Transverse colon (tissue), 4 donors: ENCODE measurements at regions of chr14 and their contacts with region 1.

Region 1: GRCh38 chr14:38721822-38722431 is 381.1 kb downstream of the SEC23A start:
- DNase-seq: peak; percentile 79
- H3K4me3 ChIP-seq: no peak overlapping the region
- H3K27ac ChIP-seq: no peak overlapping the region
- H3K4me1 ChIP-seq: no peaks in the 10 kb centered on the region
- H3K27me3 ChIP-seq: no peaks in the 10 kb centered on the region
- CTCF ChIP-seq: peak; percentile 69 to 87 (median 75)
- EP300 ChIP-seq: no peak
- POLR2A ChIP-seq: no peak

Region 2: GRCh38 chr14:38762426-38762825 is 40.5 kb after region 1 on chr14:
- in situ Hi-C with region 1: no loop called
- intact Hi-C with region 1: no loop called
- DNase-seq: no peak
- H3K4me3 ChIP-seq: no peak overlapping the region
- H3K27ac ChIP-seq: peak overlapping the region in 2 of 4 donors; percentile 1 to 38
- H3K4me1 ChIP-seq: peaks cover 0 to 17% (median 4%) of the 10 kb centered on the region in 4 donors
- H3K27me3 ChIP-seq: no peaks in the 10 kb centered on the region
- CTCF ChIP-seq: no peak
- EP300 ChIP-seq: no peak
- POLR2A ChIP-seq: no peak

Region 3: DNA sequence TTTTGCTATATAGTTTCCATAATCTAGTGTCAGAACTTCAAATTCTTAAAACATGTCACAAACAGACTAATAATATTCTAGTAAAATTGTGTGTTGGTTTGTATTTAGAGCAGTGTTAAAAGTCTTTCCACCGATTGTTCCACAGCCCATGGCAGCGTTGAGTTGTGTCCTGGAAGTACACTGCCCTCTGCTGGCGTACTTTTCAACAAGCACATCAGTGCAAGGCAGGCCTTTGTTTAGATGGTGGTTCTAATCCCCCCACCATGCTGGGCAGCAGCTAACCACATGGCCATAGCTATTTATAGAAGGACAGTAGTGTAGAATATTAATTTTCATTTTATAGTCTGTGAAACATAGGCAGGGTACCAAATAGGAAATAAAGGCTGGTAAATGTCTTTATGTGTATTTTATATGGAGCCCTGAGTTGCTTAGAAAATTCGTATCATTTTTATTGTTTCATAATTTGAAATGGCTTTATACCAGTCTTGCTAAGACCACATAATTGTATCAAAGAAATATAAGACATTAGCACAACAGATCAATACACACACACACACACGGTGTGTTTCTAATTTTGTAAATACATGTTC is 145.7 kb after region 1 on chr14:
- in situ Hi-C with region 1: loop called in 3 of 4 experiments (anchors 5 kb)
- intact Hi-C with region 1: no loop called
- DNase-seq: peak; percentile 78
- H3K4me3 ChIP-seq: no peak overlapping the region
- H3K27ac ChIP-seq: no peak overlapping the region
- H3K4me1 ChIP-seq: peaks cover 0 to 42% (median 10%) of the 10 kb centered on the region in 4 donors
- H3K27me3 ChIP-seq: no peaks in the 10 kb centered on the region
- CTCF ChIP-seq: peak; percentile 73 to 85 (median 79)
- EP300 ChIP-seq: no peak
- POLR2A ChIP-seq: no peak

Region 4: GRCh38 chr14:38873941-38874612 is 152.2 kb after region 1 on chr14:
- in situ Hi-C with region 1: loop called in 3 of 4 experiments (anchors 5 kb)
- intact Hi-C with region 1: no loop called
- DNase-seq: no peak
- H3K4me3 ChIP-seq: no peak overlapping the region
- H3K27ac ChIP-seq: no peak overlapping the region
- H3K4me1 ChIP-seq: peaks cover 0 to 9% (median under 1%) of the 10 kb centered on the region in 4 donors
- H3K27me3 ChIP-seq: no peaks in the 10 kb centered on the region
- CTCF ChIP-seq: no peak
- EP300 ChIP-seq: no peak
- POLR2A ChIP-seq: no peak

Region 5: GRCh38 chr14:39015360-39015961 is 293.5 kb after region 1 on chr14:
- in situ Hi-C with region 1: loop called (anchors 10 to 25 kb)
- intact Hi-C with region 1: no loop called
- DNase-seq: peak; percentile 15
- H3K4me3 ChIP-seq: no peak overlapping the region
- H3K27ac ChIP-seq: no peak overlapping the region
- H3K4me1 ChIP-seq: no peaks in the 10 kb centered on the region
- H3K27me3 ChIP-seq: no peaks in the 10 kb centered on the region
- CTCF ChIP-seq: peak; percentile 63 to 73 (median 70)
- EP300 ChIP-seq: no peak
- POLR2A ChIP-seq: no peak